ENCODE measurements at regions of chr20 and their contacts with region 1.

Region 1: GRCh38 chr20:19775360-19776253 is 17.5 kb downstream of the RIN2 start:
- DNase-seq: no peak
- ATAC-seq: no peak
- H3K4me3 ChIP-seq: no peak overlapping the region
- H3K27ac ChIP-seq: no peak overlapping the region
- H3K4me1 ChIP-seq: peaks cover 7% of the 10 kb centered on the region; the same call in 1 of the 2 replicates
- H3K27me3 ChIP-seq: peaks cover 0 to 1% of the 10 kb centered on the region in 2 experiments; a peak in 3 of 4 replicates
- CTCF ChIP-seq: no peak
- EP300 ChIP-seq: no peak
- POLR2A ChIP-seq: no peak
- RAD21 ChIP-seq: no peak

Region 2: DNA sequence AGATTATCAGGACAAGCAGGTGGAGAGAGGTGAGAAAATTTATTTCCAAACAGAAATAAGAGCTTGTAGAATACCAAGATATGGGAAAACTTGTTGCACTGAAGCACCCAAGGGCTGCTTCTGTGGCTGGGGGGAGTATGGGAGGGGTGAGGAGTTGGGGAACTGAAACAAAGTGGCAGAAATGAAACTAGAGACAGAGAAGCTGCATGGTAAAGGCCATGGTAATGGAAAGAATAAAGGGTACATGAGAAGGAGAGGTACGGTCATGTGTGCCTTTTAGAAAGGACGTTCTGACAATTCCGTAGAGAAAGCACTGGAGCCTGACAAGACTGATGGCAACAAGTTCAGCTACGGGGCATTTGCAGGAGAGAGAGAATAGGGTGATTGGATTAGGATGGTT is 69.1 kb before region 1 on chr20:
- CTCF ChIA-PET with region 1: no interaction called
- POLR2A ChIA-PET with region 1: interaction called, 4 read pairs
- RAD21 ChIA-PET with region 1: interaction called, 7 read pairs
- SMC1A ChIA-PET with region 1: interaction called, 13 read pairs
- in situ Hi-C with region 1: no loop called
- intact Hi-C with region 1: no loop called
- DNase-seq: peak; percentile 27
- ATAC-seq: peak; percentile 89
- H3K4me3 ChIP-seq: no peak overlapping the region
- H3K27ac ChIP-seq: no peak overlapping the region
- H3K4me1 ChIP-seq: no peaks in the 10 kb centered on the region
- H3K27me3 ChIP-seq: peaks cover 0 to 3% of the 10 kb centered on the region in 2 experiments; a peak in 2 of 4 replicates
- CTCF ChIP-seq: no peak
- EP300 ChIP-seq: no peak
- POLR2A ChIP-seq: no peak
- RAD21 ChIP-seq: no peak

Region 3: DNA sequence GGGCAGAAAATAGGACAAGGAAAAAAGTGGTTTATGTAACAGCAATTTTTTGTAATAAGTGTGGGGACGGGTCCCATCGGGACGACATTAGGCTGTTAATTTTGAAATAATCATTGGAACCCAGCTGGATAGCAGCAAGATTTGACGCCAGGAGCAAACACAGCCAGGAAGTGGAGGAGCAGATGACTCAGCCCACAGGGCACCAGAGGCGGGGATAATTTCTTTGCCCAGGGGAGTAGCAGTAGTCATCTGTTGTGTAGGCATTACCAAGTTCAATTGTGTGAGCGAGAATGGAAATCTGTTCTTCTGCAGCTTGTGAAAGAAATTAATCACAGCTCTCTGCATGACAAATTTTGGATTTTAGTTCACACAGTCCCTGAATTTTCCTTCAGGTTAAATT is 40.2 kb before region 1 on chr20:
- CTCF ChIA-PET with region 1: interaction called, 4 read pairs
- POLR2A ChIA-PET with region 1: interaction called, 5 read pairs
- RAD21 ChIA-PET with region 1: interaction called, 3 read pairs
- SMC1A ChIA-PET with region 1: interaction called, 16 read pairs
- in situ Hi-C with region 1: no loop called
- intact Hi-C with region 1: no loop called
- DNase-seq: peak; percentile 3
- ATAC-seq: peak; percentile 77
- H3K4me3 ChIP-seq: no peak overlapping the region
- H3K27ac ChIP-seq: no peak overlapping the region
- H3K4me1 ChIP-seq: no peaks in the 10 kb centered on the region
- H3K27me3 ChIP-seq: no peaks in the 10 kb centered on the region
- CTCF ChIP-seq: no peak
- EP300 ChIP-seq: no peak
- POLR2A ChIP-seq: no peak
- RAD21 ChIP-seq: no peak

Region 4: GRCh38 chr20:19742974-19743639 is 32.5 kb before region 1 on chr20:
- CTCF ChIA-PET with region 1: interaction called, 3 read pairs
- POLR2A ChIA-PET with region 1: no interaction called
- RAD21 ChIA-PET with region 1: no interaction called
- SMC1A ChIA-PET with region 1: interaction called, 16 read pairs
- in situ Hi-C with region 1: no loop called
- intact Hi-C with region 1: no loop called
- DNase-seq: no peak
- ATAC-seq: no peak
- H3K4me3 ChIP-seq: no peak overlapping the region
- H3K27ac ChIP-seq: no peak overlapping the region
- H3K4me1 ChIP-seq: no peaks in the 10 kb centered on the region
- H3K27me3 ChIP-seq: no peaks in the 10 kb centered on the region; a peak in 1 of 4 replicates
- CTCF ChIP-seq: no peak
- EP300 ChIP-seq: no peak
- POLR2A ChIP-seq: no peak
- RAD21 ChIP-seq: no peak

Region 5: DNA sequence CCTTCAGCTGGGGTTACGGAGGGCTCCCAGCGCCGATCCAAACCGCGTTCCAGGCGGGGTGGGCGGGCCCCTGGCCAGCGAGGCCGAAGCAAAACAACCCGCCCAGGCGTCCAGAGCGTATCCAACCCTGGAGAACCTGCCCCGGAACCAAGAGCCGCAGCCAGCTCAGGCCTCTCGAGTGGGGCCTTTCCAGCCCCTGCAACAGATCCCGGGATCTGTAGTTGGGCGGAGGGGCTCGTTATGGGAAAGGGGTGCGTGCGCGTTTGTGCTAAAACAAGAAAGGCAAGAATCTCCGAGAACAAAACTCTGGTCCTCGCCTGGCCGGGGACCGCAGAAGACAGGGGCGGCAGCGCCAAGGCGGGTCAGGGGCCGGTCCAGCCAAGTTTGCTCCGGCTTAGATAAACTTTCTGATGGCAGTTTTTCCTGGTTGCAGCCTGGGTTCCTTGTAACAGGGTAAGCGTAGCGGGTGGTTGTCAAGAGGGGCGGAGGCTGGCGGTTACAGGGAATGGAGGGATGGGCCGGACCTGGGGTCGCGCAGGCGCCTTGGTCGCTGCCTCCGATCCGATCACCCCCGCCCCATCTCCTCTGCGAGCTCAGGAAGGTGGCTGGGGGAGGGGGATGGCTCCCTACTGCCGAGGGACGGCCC is 18.0 kb before region 1 on chr20:
- CTCF ChIA-PET with region 1: interaction called, 6 read pairs
- POLR2A ChIA-PET with region 1: no interaction called
- RAD21 ChIA-PET with region 1: interaction called, 13 read pairs
- SMC1A ChIA-PET with region 1: interaction called, 10 read pairs
- in situ Hi-C with region 1: no loop called
- intact Hi-C with region 1: no loop called
- DNase-seq: no peak
- ATAC-seq: peak; percentile 51
- H3K4me3 ChIP-seq: no peak overlapping the region
- H3K27ac ChIP-seq: no peak overlapping the region
- H3K4me1 ChIP-seq: no peaks in the 10 kb centered on the region
- H3K27me3 ChIP-seq: peaks cover 12 to 15% of the 10 kb centered on the region in 2 experiments
- CTCF ChIP-seq: no peak
- EP300 ChIP-seq: no peak
- POLR2A ChIP-seq: no peak
- RAD21 ChIP-seq: no peak

Region 6: DNA sequence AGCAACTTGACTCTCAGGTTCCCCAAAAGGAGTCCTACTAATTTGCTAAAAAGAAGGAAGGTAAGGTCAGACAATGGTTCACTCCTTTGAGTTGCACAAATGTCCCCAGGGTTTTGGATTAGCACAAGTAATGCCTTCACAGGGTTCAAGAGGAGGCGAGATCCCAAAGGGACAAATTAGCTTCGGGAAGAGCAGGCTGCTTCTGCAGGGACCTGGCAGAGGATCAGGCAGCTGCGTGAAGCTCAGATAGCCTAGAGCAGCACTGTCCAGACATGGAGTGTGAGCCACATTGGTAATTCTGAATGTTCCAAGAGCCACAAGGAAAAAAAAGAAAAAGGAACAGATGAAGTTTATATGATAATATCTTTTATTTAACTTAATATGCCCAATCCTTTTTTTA is 392.1 kb after region 1 on chr20:
- CTCF ChIA-PET with region 1: no interaction called
- POLR2A ChIA-PET with region 1: no interaction called
- RAD21 ChIA-PET with region 1: no interaction called
- SMC1A ChIA-PET with region 1: no interaction called
- in situ Hi-C with region 1: no loop called
- intact Hi-C with region 1: no loop called
- DNase-seq: no peak
- ATAC-seq: no peak
- H3K4me3 ChIP-seq: no peak overlapping the region
- H3K27ac ChIP-seq: no peak overlapping the region
- H3K4me1 ChIP-seq: no peaks in the 10 kb centered on the region
- H3K27me3 ChIP-seq: no peaks in the 10 kb centered on the region
- CTCF ChIP-seq: no peak
- EP300 ChIP-seq: no peak
- POLR2A ChIP-seq: no peak
- RAD21 ChIP-seq: no peak

Region 7: GRCh38 chr20:20184149-20184548 is 408.5 kb after region 1 on chr20:
- CTCF ChIA-PET with region 1: no interaction called
- POLR2A ChIA-PET with region 1: no interaction called
- RAD21 ChIA-PET with region 1: no interaction called
- SMC1A ChIA-PET with region 1: no interaction called
- in situ Hi-C with region 1: no loop called
- intact Hi-C with region 1: no loop called
- DNase-seq: no peak
- ATAC-seq: peak; percentile 38; the same call in 1 of the 3 replicates
- H3K4me3 ChIP-seq: no peak overlapping the region
- H3K27ac ChIP-seq: no peak overlapping the region
- H3K4me1 ChIP-seq: peaks cover 3% of the 10 kb centered on the region; the same call in 1 of the 2 replicates
- H3K27me3 ChIP-seq: no peaks in the 10 kb centered on the region
- CTCF ChIP-seq: peak; percentile 20 to 60 (median 36); a peak in 4 of 6 replicates
- EP300 ChIP-seq: no peak
- POLR2A ChIP-seq: no peak
- RAD21 ChIP-seq: peak; percentile 33; the same call in 1 of the 2 replicates

Measured in GM12878 (cell line).